Activated B cell treated with CpG ODN at 0.5 μM for 24 hours (primary cell): ENCODE measurements at regions of chr6 and their contacts with region 1.

Region 1: DNA sequence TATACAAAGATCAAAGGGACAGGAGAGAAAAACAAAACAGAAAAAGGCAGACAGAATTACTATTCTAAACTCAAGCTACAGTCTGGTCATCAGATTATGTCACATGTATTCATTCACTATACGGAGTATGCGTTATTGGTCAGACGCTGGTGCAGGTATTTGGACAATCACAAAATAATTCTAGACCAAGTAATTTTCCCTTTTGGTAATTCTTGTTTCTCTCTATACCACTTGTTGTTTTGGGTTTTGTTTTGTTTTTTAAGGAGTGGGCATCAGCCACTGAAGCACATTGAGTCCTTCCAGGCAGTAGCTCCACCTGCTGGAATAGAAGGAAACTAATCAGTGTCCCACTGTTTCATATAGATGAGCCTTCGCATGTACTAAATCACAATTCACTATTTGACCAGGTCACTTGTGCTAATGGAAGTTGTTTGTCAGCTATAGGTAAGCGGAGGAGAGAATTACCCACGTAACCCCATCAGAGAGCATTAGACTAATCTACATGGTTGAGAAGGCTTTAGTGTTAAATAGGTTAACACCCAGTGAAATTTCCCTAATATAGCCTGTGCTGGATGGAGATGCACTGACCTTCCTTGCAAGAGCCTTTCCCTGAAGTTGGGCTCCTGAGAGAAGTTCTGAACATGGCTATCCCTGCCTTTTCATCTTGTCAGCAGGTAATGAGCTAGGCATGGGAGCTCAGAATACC is 77.9 kb downstream of the TNFAIP3 start:
- DNase-seq: no peak
- ATAC-seq: peak; percentile 73
- H3K4me3 Mint-ChIP-seq: peak overlapping the region; percentile 17
- H3K27ac Mint-ChIP-seq: peak overlapping the region; percentile 27
- H3K4me1 Mint-ChIP-seq: peaks cover 30% of the 10 kb centered on the region
- H3K27me3 Mint-ChIP-seq: no peaks in the 10 kb centered on the region
- CTCF ChIP-seq: no peak

Region 2: GRCh38 chr6:137707590-137708360 is 237.2 kb before region 1 on chr6:
- CTCF ChIA-PET with region 1: interaction called, 39 read pairs
- POLR2A ChIA-PET with region 1: interaction called, 3 read pairs
- intact Hi-C with region 1: loop called (anchors 1 kb)
- DNase-seq: peak; percentile 27
- ATAC-seq: peak; percentile 75
- H3K4me3 Mint-ChIP-seq: peak overlapping the region; percentile 57
- H3K27ac Mint-ChIP-seq: peak overlapping the region; percentile 85
- H3K4me1 Mint-ChIP-seq: peaks cover 59% of the 10 kb centered on the region
- H3K27me3 Mint-ChIP-seq: no peaks in the 10 kb centered on the region
- CTCF ChIP-seq: peak; percentile 38

Region 3: DNA sequence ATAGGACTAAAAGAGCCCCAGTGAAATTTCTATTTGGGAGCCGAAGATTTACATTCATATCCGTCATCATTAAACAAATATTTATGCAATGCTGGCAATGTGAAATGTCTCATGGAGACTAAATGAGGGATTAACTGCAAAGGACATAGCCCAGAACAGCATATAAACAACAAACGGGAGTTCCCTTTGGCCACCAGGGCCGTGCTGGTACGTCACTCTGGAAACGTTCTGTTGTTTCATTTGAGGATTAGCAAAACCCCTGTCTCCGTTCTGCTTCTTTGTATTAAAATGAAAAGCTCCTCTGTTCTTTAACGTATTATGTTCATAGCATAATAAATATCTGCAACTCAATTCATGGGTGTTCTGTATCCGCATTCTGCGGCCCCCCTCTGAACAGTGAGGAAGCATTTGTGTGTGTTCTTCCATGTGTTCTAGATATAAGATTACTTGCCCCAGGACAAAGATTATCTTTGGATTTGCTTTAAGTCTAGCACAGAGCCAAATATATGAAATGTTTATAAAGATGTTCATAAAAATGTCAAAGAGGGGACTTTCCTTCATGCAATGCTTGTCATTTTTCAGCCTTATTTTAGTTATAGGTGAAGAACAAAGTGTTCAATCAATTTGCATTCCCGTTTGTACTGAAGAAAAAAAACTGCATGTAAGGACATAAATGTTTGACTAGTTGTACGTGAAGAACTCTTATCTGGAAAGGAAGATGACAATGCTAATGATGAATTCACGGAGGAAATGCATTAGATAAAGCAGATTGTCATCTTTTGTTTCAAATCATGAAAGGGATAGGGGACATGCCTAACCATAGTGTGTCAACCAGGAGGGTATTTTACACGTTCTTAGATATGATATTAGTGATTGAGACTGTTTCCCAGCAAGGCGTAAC is 167.9 kb before region 1 on chr6:
- CTCF ChIA-PET with region 1: no interaction called
- POLR2A ChIA-PET with region 1: no interaction called
- intact Hi-C with region 1: no loop called
- DNase-seq: no peak
- ATAC-seq: no peak
- H3K4me3 Mint-ChIP-seq: no peak overlapping the region
- H3K27ac Mint-ChIP-seq: no peak overlapping the region
- H3K4me1 Mint-ChIP-seq: peaks cover 7% of the 10 kb centered on the region
- H3K27me3 Mint-ChIP-seq: no peaks in the 10 kb centered on the region
- CTCF ChIP-seq: no peak

Region 4: GRCh38 chr6:137856138-137856898 is 88.6 kb before region 1 on chr6:
- CTCF ChIA-PET with region 1: no interaction called
- POLR2A ChIA-PET with region 1: no interaction called
- intact Hi-C with region 1: no loop called
- DNase-seq: no peak
- ATAC-seq: no peak
- H3K4me3 Mint-ChIP-seq: no peak overlapping the region
- H3K27ac Mint-ChIP-seq: no peak overlapping the region
- H3K4me1 Mint-ChIP-seq: peaks cover 18% of the 10 kb centered on the region
- H3K27me3 Mint-ChIP-seq: no peaks in the 10 kb centered on the region
- CTCF ChIP-seq: no peak

Region 5: DNA sequence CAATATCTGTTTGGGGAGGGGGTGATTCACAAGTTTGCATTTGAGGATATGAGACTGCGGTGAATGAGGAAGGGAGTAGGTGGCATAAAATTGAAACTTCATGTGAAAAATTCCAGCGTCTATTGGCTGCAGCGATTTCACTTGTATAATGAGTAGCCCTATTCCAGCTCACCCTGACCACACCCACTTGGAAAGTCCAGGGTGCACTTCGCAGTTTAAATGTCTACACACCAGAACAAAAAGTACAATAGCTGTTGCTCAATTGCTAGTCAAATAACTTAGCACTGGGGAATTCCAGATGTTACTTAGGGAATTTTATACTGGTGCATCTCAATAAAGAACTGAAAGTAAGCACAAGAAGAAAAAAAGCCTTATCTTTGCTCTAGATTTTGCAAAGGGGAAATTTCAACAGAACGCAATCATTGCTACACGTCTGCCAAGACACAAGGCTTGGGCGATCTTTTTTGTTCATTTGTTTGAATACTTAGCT is 71.6 kb before region 1 on chr6:
- CTCF ChIA-PET with region 1: interaction called, 132 read pairs
- POLR2A ChIA-PET with region 1: interaction called, 60 read pairs
- intact Hi-C with region 1: loop called (anchors 1 kb)
- DNase-seq: peak; percentile 50
- ATAC-seq: peak; percentile 84
- H3K4me3 Mint-ChIP-seq: peak overlapping the region; percentile 96
- H3K27ac Mint-ChIP-seq: peak overlapping the region; percentile 94
- H3K4me1 Mint-ChIP-seq: peaks cover 80% of the 10 kb centered on the region
- H3K27me3 Mint-ChIP-seq: no peaks in the 10 kb centered on the region
- CTCF ChIP-seq: no peak

Region 6: GRCh38 chr6:137903933-137904821 is 40.8 kb before region 1 on chr6:
- CTCF ChIA-PET with region 1: interaction called, 4 read pairs
- POLR2A ChIA-PET with region 1: no interaction called
- intact Hi-C with region 1: loop called (anchors 1 kb)
- DNase-seq: no peak
- ATAC-seq: peak; percentile 84
- H3K4me3 Mint-ChIP-seq: peak overlapping the region; percentile 59
- H3K27ac Mint-ChIP-seq: peak overlapping the region; percentile 79
- H3K4me1 Mint-ChIP-seq: peaks cover 43% of the 10 kb centered on the region
- H3K27me3 Mint-ChIP-seq: no peaks in the 10 kb centered on the region
- CTCF ChIP-seq: no peak

Region 7: GRCh38 chr6:137927777-137928218 is 17.1 kb before region 1 on chr6:
- CTCF ChIA-PET with region 1: interaction called, 9 read pairs
- POLR2A ChIA-PET with region 1: interaction called, 25 read pairs
- intact Hi-C with region 1: loop called (anchors 1 kb)
- DNase-seq: peak; percentile 51
- ATAC-seq: peak; percentile 95
- H3K4me3 Mint-ChIP-seq: peak overlapping the region; percentile 48
- H3K27ac Mint-ChIP-seq: peak overlapping the region; percentile 85
- H3K4me1 Mint-ChIP-seq: peaks cover 57% of the 10 kb centered on the region
- H3K27me3 Mint-ChIP-seq: no peaks in the 10 kb centered on the region
- CTCF ChIP-seq: no peak

Region 8: GRCh38 chr6:137982418-137983189 is 37.7 kb after region 1 on chr6:
- CTCF ChIA-PET with region 1: no interaction called
- POLR2A ChIA-PET with region 1: no interaction called
- intact Hi-C with region 1: no loop called
- DNase-seq: no peak
- ATAC-seq: no peak
- H3K4me3 Mint-ChIP-seq: no peak overlapping the region
- H3K27ac Mint-ChIP-seq: no peak overlapping the region
- H3K4me1 Mint-ChIP-seq: peaks cover 9% of the 10 kb centered on the region
- H3K27me3 Mint-ChIP-seq: no peaks in the 10 kb centered on the region
- CTCF ChIP-seq: no peak

Region 9: GRCh38 chr6:138012682-138013081 is 67.7 kb after region 1 on chr6:
- CTCF ChIA-PET with region 1: no interaction called
- POLR2A ChIA-PET with region 1: no interaction called
- intact Hi-C with region 1: no loop called
- DNase-seq: no peak
- ATAC-seq: no peak
- H3K4me3 Mint-ChIP-seq: no peak overlapping the region
- H3K27ac Mint-ChIP-seq: no peak overlapping the region
- H3K4me1 Mint-ChIP-seq: no peaks in the 10 kb centered on the region
- H3K27me3 Mint-ChIP-seq: peaks cover 8% of the 10 kb centered on the region
- CTCF ChIP-seq: no peak